ENCODE measurements at regions of chr17 and their contacts with region 1.

Region 1: GRCh38 chr17:74790161-74791054 is 14.3 kb upstream of the NAT9 start:
- DNase-seq: peak; percentile 16
- H3K4me3 Mint-ChIP-seq: peak overlapping the region; percentile 39
- H3K27ac Mint-ChIP-seq: peak overlapping the region; percentile 85
- H3K4me1 Mint-ChIP-seq: peaks cover 35% of the 10 kb centered on the region
- H3K27me3 Mint-ChIP-seq: no peaks in the 10 kb centered on the region

Region 2: GRCh38 chr17:74770498-74771318 is 19.7 kb before region 1 on chr17:
- CTCF ChIA-PET with region 1: interaction called, 13 read pairs
- POLR2A ChIA-PET with region 1: no interaction called
- DNase-seq: peak; percentile 74
- H3K4me3 Mint-ChIP-seq: no peak overlapping the region
- H3K27ac Mint-ChIP-seq: peak overlapping the region; percentile 61
- H3K4me1 Mint-ChIP-seq: peaks cover 47% of the 10 kb centered on the region
- H3K27me3 Mint-ChIP-seq: no peaks in the 10 kb centered on the region

Region 3: GRCh38 chr17:74776044-74776977 is 14.1 kb before region 1 on chr17 and contains the start of gene NAT9:
- CTCF ChIA-PET with region 1: interaction called, 15 read pairs
- POLR2A ChIA-PET with region 1: no interaction called
- DNase-seq: peak; percentile 98
- H3K4me3 Mint-ChIP-seq: peak within 1 kb of the TSS; percentile 98
- H3K27ac Mint-ChIP-seq: peak within 1 kb of the TSS; percentile 90
- H3K4me1 Mint-ChIP-seq: peaks cover 74% of the 10 kb centered on the region
- H3K27me3 Mint-ChIP-seq: no peaks in the 10 kb centered on the region
- total RNA-seq, gene NAT9: 28.6 to 34.4 TPM

Region 4: DNA sequence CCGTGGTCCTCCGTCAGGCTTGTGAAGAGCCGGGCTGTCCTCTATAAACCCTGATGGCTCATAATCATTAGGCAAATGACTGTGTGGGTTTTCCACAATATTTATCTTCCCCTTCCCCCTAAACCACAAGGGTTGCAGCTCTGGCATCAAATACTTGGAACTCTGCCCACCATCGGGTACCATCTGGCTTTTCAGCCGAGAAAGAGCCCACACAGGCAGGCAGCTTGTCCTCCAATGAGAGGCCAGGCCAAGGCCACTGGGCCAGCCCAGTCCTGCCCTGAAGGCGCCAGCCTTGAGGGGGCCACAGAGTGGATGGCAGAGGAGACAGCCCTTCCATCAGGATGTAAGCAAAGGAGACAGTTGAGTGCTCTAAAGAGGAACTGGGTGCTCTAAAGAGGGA is 17.5 kb after region 1 on chr17:
- CTCF ChIA-PET with region 1: interaction called, 19 read pairs
- POLR2A ChIA-PET with region 1: no interaction called
- DNase-seq: no peak
- H3K4me3 Mint-ChIP-seq: no peak overlapping the region
- H3K27ac Mint-ChIP-seq: no peak overlapping the region
- H3K4me1 Mint-ChIP-seq: no peaks in the 10 kb centered on the region
- H3K27me3 Mint-ChIP-seq: no peaks in the 10 kb centered on the region

Region 5: GRCh38 chr17:74852237-74853047 is 62.0 kb after region 1 on chr17:
- CTCF ChIA-PET with region 1: interaction called, 11 read pairs
- POLR2A ChIA-PET with region 1: no interaction called
- DNase-seq: peak; percentile 75
- H3K4me3 Mint-ChIP-seq: peak overlapping the region; percentile 71
- H3K27ac Mint-ChIP-seq: no peak overlapping the region
- H3K4me1 Mint-ChIP-seq: peaks cover 14% of the 10 kb centered on the region
- H3K27me3 Mint-ChIP-seq: peaks cover 51% of the 10 kb centered on the region

Region 6: GRCh38 chr17:74864866-74865395 is 74.5 kb after region 1 on chr17:
- CTCF ChIA-PET with region 1: interaction called, 29 read pairs
- POLR2A ChIA-PET with region 1: interaction called, 3 read pairs
- DNase-seq: peak; percentile 71
- H3K4me3 Mint-ChIP-seq: no peak overlapping the region
- H3K27ac Mint-ChIP-seq: no peak overlapping the region
- H3K4me1 Mint-ChIP-seq: peaks cover 19% of the 10 kb centered on the region
- H3K27me3 Mint-ChIP-seq: peaks cover 17% of the 10 kb centered on the region

Measured in activated CD4-positive, alpha-beta T cell treated with anti-CD3 and anti-CD28 coated beads, Interleukin-2, amount 10 ng/mL, durations not matched to agents 7 days and 5 days (primary cell).